WTC11 (cell line): ENCODE measurements at regions of chr1 and their contacts with region 1.

Region 1: GRCh38 chr1:108643492-108644335 is 17.2 kb downstream of the HENMT1 start:
- DNase-seq: no peak
- ATAC-seq: peak; percentile 50
- H3K4me3 Mint-ChIP-seq: no peak overlapping the region
- H3K27ac Mint-ChIP-seq: no peak overlapping the region
- H3K4me1 Mint-ChIP-seq: peaks cover 11% of the 10 kb centered on the region
- H3K27me3 Mint-ChIP-seq: no peaks in the 10 kb centered on the region
- CTCF ChIP-seq: no peak

Region 2: DNA sequence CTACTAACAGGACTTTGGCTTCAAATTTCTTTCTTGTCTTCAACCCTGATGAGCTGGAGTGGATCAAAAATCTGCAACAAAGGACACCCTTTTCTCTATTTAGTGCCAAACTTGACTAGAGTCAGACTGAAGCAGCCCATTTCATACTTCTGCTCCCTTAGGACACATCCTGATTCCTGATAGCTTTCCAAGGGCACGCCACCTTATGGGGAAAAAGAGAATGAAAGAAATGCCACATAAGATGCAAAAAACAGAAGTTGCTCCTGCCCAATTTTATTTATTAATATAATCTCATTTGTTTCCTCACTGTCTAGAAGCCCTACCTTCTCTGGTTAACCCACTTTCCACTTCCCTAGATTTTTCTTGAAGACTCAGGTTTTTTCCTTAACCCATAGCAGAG is 327.2 kb before region 1 on chr1:
- CTCF ChIA-PET with region 1: interaction called, 10 read pairs
- POLR2A ChIA-PET with region 1: no interaction called
- DNase-seq: no peak
- ATAC-seq: peak; percentile 82
- H3K4me3 Mint-ChIP-seq: no peak overlapping the region
- H3K27ac Mint-ChIP-seq: no peak overlapping the region
- H3K4me1 Mint-ChIP-seq: no peaks in the 10 kb centered on the region
- H3K27me3 Mint-ChIP-seq: no peaks in the 10 kb centered on the region
- CTCF ChIP-seq: 0 out of 2 replicates have a peak, but pooled peaks have one; percentile 22

Region 3: GRCh38 chr1:108327534-108328462 is 315.9 kb before region 1 on chr1:
- CTCF ChIA-PET with region 1: interaction called, 10 read pairs
- POLR2A ChIA-PET with region 1: no interaction called
- DNase-seq: peak; percentile 50
- ATAC-seq: peak; percentile 100
- H3K4me3 Mint-ChIP-seq: no peak overlapping the region
- H3K27ac Mint-ChIP-seq: no peak overlapping the region
- H3K4me1 Mint-ChIP-seq: no peaks in the 10 kb centered on the region
- H3K27me3 Mint-ChIP-seq: no peaks in the 10 kb centered on the region; the same call in 1 of the 2 replicates
- CTCF ChIP-seq: peak; percentile 20; the same call in 1 of the 2 replicates

Region 4: GRCh38 chr1:108512239-108512981 is 131.3 kb before region 1 on chr1:
- CTCF ChIA-PET with region 1: interaction called, 12 read pairs
- POLR2A ChIA-PET with region 1: no interaction called
- DNase-seq: no peak
- ATAC-seq: no peak
- H3K4me3 Mint-ChIP-seq: no peak overlapping the region
- H3K27ac Mint-ChIP-seq: no peak overlapping the region
- H3K4me1 Mint-ChIP-seq: 0 out of 2 replicates have a peak, but pooled peaks cover 4% of the 10 kb centered on the region
- H3K27me3 Mint-ChIP-seq: peaks cover 2% of the 10 kb centered on the region; the same call in 1 of the 2 replicates
- CTCF ChIP-seq: peak; percentile 60

Region 5: DNA sequence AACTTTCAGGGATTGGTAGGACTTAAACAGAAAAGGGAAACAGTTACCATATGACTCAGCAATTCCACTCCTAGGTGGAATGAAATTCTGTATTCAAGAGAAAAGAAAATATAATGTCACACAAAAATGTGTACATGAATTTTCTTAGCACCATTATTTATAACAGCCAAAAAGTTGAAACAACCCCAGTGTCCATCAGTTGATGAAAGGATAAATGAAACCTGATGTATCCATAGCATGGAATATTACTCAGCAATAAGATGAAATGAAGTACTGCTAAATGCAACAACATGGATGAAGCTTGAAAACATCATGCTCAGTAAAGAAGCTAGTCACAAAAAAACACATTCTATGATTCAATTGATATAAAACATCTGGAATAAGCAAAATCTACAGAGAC is 68.3 kb before region 1 on chr1:
- CTCF ChIA-PET with region 1: no interaction called
- POLR2A ChIA-PET with region 1: no interaction called
- DNase-seq: no peak
- ATAC-seq: no peak
- H3K4me3 Mint-ChIP-seq: no peak overlapping the region
- H3K27ac Mint-ChIP-seq: 0 out of 2 replicates have a peak overlapping the region, but pooled peaks have one; percentile 3
- H3K4me1 Mint-ChIP-seq: no peaks in the 10 kb centered on the region
- H3K27me3 Mint-ChIP-seq: no peaks in the 10 kb centered on the region
- CTCF ChIP-seq: no peak

Region 6: GRCh38 chr1:108785264-108785663 is 141.6 kb after region 1 on chr1:
- CTCF ChIA-PET with region 1: no interaction called
- POLR2A ChIA-PET with region 1: no interaction called
- DNase-seq: no peak
- ATAC-seq: no peak
- H3K4me3 Mint-ChIP-seq: no peak overlapping the region
- H3K27ac Mint-ChIP-seq: no peak overlapping the region
- H3K4me1 Mint-ChIP-seq: peaks cover 4% of the 10 kb centered on the region; the same call in 1 of the 2 replicates
- H3K27me3 Mint-ChIP-seq: peaks cover 3% of the 10 kb centered on the region
- CTCF ChIP-seq: no peak